Activated B cell treated with CpG ODN at 0.5 μM for 24 hours (primary cell): ENCODE measurements at regions of chr4 and their contacts with region 1.

Region 1: DNA sequence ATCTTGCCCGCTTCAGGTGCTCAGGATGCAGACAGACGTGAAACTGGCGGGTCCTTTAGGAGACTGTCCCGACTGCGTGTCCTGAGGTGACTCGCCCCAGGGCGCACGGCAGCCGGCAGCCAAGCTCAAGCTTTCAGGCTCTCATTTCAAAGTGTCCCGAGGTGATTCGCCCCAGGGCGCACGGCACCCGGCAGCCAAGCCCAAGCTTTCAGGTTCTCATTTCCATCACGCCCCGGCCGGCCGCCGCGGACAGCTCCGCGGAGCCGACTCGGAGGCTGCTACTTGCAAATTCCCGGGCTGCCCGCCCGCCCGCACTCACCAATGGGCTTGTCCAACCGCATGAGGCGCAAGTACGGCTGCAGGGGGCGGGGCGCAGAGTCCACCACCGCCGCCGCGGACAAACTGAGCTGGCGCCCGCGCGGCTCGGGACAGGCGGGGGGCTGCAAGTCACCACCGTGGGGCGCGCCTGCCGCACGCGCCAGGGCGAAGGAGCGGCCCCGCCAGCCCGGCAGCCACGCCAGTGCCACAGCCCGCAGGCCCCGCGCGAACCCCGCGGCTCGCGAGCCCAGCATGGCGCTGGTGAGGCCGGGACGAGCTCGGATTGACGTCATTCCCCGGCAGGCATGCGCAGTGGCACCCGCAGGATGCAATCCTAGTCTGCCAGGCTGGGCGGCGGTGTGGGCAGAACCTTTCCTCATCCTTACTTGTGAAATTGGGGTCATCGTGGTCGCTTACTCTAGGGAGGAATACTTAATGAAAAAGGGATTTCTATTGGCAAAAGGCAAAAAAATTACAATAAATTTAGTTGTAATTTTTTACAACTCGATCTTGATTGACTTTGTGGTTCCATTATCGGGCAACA is at the start of gene COQ2:
- DNase-seq: peak; percentile 96
- ATAC-seq: peak; percentile 89
- H3K4me3 Mint-ChIP-seq: peak within 1 kb of the TSS; percentile 98
- H3K27ac Mint-ChIP-seq: peak within 1 kb of the TSS; percentile 99
- H3K4me1 Mint-ChIP-seq: peaks cover 35% of the 10 kb centered on the region
- H3K27me3 Mint-ChIP-seq: no peaks in the 10 kb centered on the region
- CTCF ChIP-seq: no peak
- total RNA-seq, gene COQ2: 15.2 and 18.8 TPM in 2 replicates

Region 2: DNA sequence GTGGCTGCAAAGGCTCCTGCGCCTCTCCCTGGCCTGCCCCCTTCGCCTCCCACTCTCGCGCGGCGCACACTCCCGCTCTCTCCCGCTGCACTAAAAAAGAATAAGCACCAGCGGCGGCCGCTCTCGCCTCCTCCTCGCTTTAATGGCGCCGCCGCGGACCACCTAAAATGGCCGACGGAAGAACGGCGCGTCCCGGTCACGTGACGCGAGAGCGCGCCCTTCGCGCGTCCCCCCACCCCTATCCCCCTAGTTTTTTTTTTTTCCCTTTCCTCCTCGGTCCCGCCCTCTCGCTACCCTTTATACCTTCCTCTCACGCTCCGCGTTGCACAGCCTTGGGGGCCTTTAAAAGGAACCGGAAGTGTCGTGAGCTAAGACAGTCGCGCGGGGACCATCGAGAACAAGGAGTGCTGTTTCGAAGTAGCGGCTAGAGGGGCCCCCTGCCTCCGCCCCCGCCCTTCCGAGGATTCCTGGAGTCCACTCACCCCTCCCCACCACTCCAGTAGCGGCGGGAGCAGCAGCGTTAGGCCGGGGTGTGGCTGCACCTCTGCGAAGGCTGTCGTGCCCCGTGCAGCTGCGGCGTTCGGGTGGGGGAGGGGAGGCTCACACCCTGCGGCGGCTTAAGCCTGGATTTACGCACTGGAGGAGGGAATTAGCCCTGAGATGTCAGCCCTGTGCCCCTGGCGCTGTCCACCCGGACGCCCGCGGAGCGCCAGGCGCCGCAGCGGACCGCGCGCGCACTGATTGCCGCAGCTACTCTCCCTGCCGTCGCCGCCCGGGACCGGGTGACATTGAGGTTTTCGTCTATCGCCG is 910.4 kb before region 1 on chr4 and contains the start of gene HNRNPD:
- CTCF ChIA-PET with region 1: no interaction called
- POLR2A ChIA-PET with region 1: interaction called, 3 read pairs
- intact Hi-C with region 1: loop called (anchors 5 kb)
- DNase-seq: peak; percentile 83
- ATAC-seq: peak; percentile 88
- H3K4me3 Mint-ChIP-seq: peak within 1 kb of the TSS; percentile 98
- H3K27ac Mint-ChIP-seq: peak within 1 kb of the TSS; percentile 100
- H3K4me1 Mint-ChIP-seq: peaks cover 55% of the 10 kb centered on the region
- H3K27me3 Mint-ChIP-seq: no peaks in the 10 kb centered on the region
- CTCF ChIP-seq: no peak
- total RNA-seq, gene HNRNPD: 300 and 350 TPM in 2 replicates

Region 3: GRCh38 chr4:82865592-82865991 is 418.8 kb before region 1 on chr4:
- CTCF ChIA-PET with region 1: no interaction called
- POLR2A ChIA-PET with region 1: interaction called, 12 read pairs
- intact Hi-C with region 1: no loop called
- DNase-seq: no peak
- ATAC-seq: no peak
- H3K4me3 Mint-ChIP-seq: no peak overlapping the region
- H3K27ac Mint-ChIP-seq: no peak overlapping the region
- H3K4me1 Mint-ChIP-seq: no peaks in the 10 kb centered on the region
- H3K27me3 Mint-ChIP-seq: no peaks in the 10 kb centered on the region
- CTCF ChIP-seq: no peak

Region 4: GRCh38 chr4:83034630-83035494 is 249.6 kb before region 1 on chr4 and contains the start of gene COPS4:
- CTCF ChIA-PET with region 1: interaction called, 3 read pairs
- POLR2A ChIA-PET with region 1: interaction called, 18 read pairs
- intact Hi-C with region 1: loop called (anchors 1 kb)
- DNase-seq: peak; percentile 82
- ATAC-seq: peak; percentile 96
- H3K4me3 Mint-ChIP-seq: peak within 1 kb of the TSS; percentile 99
- H3K27ac Mint-ChIP-seq: peak within 1 kb of the TSS; percentile 100
- H3K4me1 Mint-ChIP-seq: peaks cover 31% of the 10 kb centered on the region
- H3K27me3 Mint-ChIP-seq: no peaks in the 10 kb centered on the region
- CTCF ChIP-seq: no peak
- total RNA-seq, gene COPS4: 32.7 and 36.7 TPM in 2 replicates

Region 5: DNA sequence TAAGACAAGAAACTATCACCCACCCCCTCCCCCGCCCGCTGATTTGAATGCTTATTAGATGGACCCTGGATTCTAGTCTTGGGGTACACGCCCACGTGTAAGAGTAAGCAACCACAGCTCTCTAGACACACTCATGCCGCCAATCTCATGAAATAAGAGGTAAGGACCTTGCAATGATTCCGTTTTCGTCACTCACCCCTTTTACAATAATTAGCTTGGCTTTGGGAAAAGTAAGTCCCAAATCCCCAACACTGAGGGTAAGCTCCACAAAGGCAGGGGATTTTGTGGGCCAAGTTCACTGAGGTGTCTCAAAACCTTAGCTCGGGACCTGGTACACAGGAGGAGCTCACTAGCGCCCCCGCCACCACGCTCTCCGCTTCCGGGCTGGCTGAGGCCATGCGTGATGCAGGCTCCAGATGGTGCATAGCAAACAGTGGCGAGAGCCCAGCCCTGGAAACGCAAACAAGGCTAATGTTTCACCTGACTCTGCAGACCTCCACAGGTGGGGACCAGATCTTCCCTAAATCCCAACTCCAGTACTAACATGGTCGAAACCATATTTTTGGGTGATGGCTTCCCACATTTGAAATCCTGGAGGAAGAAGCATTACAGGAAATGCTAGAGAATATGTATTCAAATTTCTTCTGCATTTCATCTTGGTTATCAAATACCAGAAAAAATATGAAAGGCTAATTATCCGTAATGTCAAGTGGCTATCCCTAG is 174.0 kb before region 1 on chr4:
- CTCF ChIA-PET with region 1: interaction called, 10 read pairs
- POLR2A ChIA-PET with region 1: interaction called, 38 read pairs
- intact Hi-C with region 1: loop called (anchors 1 kb)
- DNase-seq: peak; percentile 82
- ATAC-seq: peak; percentile 76
- H3K4me3 Mint-ChIP-seq: peak overlapping the region; percentile 94
- H3K27ac Mint-ChIP-seq: peak overlapping the region; percentile 99
- H3K4me1 Mint-ChIP-seq: peaks cover 70% of the 10 kb centered on the region
- H3K27me3 Mint-ChIP-seq: no peaks in the 10 kb centered on the region
- CTCF ChIP-seq: no peak

Region 6: DNA sequence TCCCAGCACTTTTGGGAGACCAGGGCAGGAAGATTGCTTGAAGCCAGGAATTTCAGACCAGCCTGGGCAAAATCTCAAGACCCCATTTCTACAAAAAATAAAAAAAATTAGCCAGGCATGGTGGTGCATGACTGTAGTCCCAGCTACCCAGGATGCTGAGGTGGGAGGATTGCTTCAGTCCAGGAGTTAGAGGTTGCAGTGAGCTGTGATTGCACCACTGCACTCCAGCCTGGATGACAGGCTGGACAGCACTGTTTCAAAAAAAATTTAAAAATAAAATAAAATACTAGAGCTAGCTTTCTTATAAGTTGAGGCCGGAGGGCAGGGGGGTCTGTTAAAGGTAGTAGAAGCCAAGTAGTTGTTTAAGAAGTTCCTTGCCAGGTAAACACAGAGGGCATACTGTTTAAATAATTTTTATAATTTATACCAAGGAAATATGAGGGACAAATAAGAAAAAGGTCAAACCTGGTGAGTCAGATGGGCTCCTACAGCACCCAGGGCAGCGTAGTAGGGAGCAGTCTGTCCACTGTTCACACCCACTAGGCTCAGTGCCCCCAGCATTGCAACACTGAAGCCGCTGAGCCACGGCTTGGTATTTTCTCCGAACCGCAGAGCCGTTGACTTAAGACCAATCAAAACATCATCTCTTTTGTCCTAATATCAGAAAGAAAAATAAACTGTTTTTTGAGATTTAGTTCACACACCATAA is 17.1 kb before region 1 on chr4:
- CTCF ChIA-PET with region 1: interaction called, 51 read pairs
- POLR2A ChIA-PET with region 1: interaction called, 8 read pairs
- intact Hi-C with region 1: no loop called
- DNase-seq: no peak
- ATAC-seq: no peak
- H3K4me3 Mint-ChIP-seq: no peak overlapping the region
- H3K27ac Mint-ChIP-seq: no peak overlapping the region
- H3K4me1 Mint-ChIP-seq: peaks cover 23% of the 10 kb centered on the region
- H3K27me3 Mint-ChIP-seq: no peaks in the 10 kb centered on the region
- CTCF ChIP-seq: no peak

Region 7: DNA sequence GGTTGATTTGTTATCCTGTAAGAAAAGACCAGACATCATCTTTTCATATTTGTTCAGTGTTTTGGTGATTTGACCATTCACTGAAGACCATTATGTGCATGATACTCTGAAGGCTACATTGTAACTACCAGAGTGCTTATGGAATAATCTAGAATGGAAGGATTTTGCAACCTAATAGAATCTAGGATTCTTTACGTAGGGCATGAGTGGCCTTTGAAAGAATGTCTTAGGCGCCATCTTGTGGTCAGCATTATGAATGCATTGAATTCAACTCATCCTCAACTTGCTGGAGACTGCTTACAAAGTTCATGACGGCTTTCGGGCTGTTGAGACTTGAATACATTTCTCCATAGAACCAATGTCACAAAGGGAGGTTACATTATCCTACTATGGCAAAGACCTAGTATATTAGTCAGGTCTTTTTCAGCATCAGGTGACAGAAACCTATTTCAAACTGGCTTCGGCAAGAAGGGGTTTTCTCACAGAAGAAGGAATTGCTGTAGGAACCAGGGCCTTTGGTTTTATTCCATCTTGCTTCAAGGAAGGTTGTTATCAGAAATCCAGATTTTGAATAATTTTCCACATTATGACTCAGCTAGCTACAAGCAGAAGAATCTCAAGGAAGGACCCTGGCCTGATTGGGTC is 355.5 kb after region 1 on chr4:
- CTCF ChIA-PET with region 1: no interaction called
- POLR2A ChIA-PET with region 1: no interaction called
- intact Hi-C with region 1: loop called (anchors 2 kb)
- DNase-seq: no peak
- ATAC-seq: peak; percentile 62
- H3K4me3 Mint-ChIP-seq: no peak overlapping the region
- H3K27ac Mint-ChIP-seq: no peak overlapping the region
- H3K4me1 Mint-ChIP-seq: peaks cover 2% of the 10 kb centered on the region
- H3K27me3 Mint-ChIP-seq: peaks cover 9% of the 10 kb centered on the region
- CTCF ChIP-seq: no peak